ENCODE measurements at regions of chrX and their contacts with region 1.

Region 1: GRCh38 chrX:45849253-45849862 is 648.7 kb upstream of the DIPK2B start:
- DNase-seq: peak; percentile 23
- CTCF ChIP-seq: peak; percentile 28

Region 2: GRCh38 chrX:45527834-45528233 is 321.5 kb before region 1 on chrX:
- in situ Hi-C with region 1: loop called (anchors 25 kb)
- DNase-seq: no peak
- CTCF ChIP-seq: no peak

Region 3: DNA sequence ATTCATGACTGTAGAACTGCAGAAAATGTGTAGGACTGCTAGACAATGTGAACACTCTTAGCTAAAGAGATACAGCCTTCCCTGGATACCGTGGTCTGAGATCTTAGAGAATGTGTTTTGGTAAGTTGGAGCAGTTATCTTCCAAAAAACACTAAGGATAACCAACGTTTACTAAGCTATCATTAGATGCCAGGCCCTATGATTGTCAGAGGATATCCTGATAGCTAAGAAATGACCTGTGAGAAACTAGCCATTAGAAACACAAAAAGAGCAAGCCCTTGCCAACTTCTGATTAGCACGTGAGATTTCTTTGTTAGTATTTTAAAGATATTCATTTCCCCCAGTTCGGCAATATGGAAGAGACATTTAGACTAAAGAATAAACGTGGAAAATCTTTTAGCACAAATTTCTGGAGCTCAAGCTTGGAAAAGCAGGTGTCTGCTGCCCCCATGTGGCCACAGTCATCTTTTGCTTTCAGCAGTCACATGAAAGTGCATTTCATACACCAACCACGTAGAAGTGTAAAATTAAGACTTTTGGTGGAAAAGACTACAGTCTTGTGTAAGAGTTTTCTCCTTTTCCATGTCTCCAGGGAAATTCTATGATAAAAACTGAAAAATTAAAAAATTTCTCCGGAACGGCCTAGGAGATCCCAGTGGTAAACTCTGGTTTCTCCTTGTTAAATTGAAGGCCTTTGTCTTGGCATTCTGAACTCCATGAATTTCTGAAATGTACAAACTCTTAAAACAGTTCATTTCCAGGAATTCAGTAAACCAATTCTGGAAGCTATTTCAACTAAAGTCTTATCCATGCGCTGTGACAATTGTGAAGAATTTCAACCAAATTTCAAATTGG is 559.4 kb after region 1 on chrX:
- in situ Hi-C with region 1: loop called (anchors 25 kb)
- DNase-seq: peak; percentile 69
- CTCF ChIP-seq: peak; percentile 90

Measured in GM13977 (cell line).